Ovary (tissue), 10 donors: ENCODE measurements at regions of chr15 and their contacts with region 1.

Region 1: DNA sequence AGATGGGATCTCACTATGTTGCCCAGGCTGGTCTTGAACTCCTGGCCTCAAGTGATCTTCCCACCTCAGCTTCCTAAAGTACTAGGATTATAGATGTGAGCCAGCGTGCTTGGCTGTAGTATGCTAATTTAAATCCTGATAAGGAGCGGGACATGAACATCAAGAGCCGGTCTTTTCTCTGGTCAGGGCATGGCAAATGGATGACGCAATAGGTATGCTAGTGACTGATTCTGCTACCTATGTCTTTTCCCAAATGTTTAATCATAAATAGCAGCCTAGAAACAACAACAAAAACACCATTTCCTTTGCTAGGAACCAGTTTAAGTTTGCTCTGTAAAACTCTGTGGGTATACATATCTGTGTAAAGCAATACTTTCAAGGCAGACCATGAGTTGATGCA is 64.7 kb downstream of the STARD9 start:
- DNase-seq: no peak
- H3K4me3 ChIP-seq: no peak overlapping the region
- H3K27ac ChIP-seq: no peak overlapping the region
- H3K4me1 ChIP-seq: peaks cover 1% of the 10 kb centered on the region
- H3K27me3 ChIP-seq: no peaks in the 10 kb centered on the region
- CTCF ChIP-seq: no peak
- EP300 ChIP-seq: no peak
- POLR2A ChIP-seq: no peak

Region 2: GRCh38 chr15:41993447-41994167 is 646.5 kb before region 1 on chr15:
- intact Hi-C with region 1: no loop called
- DNase-seq: peak in 1 of 5 donors; percentile 17
- H3K4me3 ChIP-seq: no peak overlapping the region
- H3K27ac ChIP-seq: no peak overlapping the region
- H3K4me1 ChIP-seq: no peaks in the 10 kb centered on the region
- H3K27me3 ChIP-seq: no peaks in the 10 kb centered on the region
- CTCF ChIP-seq: no peak
- EP300 ChIP-seq: no peak
- POLR2A ChIP-seq: no peak

Region 3: GRCh38 chr15:42548253-42549031 is 91.7 kb before region 1 on chr15 and contains the starts of genes HAUS2 and LRRC57:
- intact Hi-C with region 1: loop called in 1 of 4 experiments (anchors 10 kb)
- DNase-seq: peak; percentile 86 to 93 (median 90)
- H3K4me3 ChIP-seq: peak within 1 kb of the TSS; percentile 61
- H3K27ac ChIP-seq: peak within 1 kb of the TSS; percentile 83 to 93
- H3K4me1 ChIP-seq: peaks cover 4% of the 10 kb centered on the region
- H3K27me3 ChIP-seq: no peaks in the 10 kb centered on the region
- CTCF ChIP-seq: peak in 1 of 3 donors; percentile 13
- EP300 ChIP-seq: no peak
- POLR2A ChIP-seq: peak; percentile 90
- total RNA-seq, gene HAUS2: 11.1 to 22.9 (median 17.8) TPM
- total RNA-seq, gene LRRC57: 13.2 to 28.7 (median 17.7) TPM

Region 4: GRCh38 chr15:42716626-42717025 is 76.5 kb after region 1 on chr15:
- intact Hi-C with region 1: no loop called
- DNase-seq: no peak
- H3K4me3 ChIP-seq: no peak overlapping the region
- H3K27ac ChIP-seq: no peak overlapping the region
- H3K4me1 ChIP-seq: no peaks in the 10 kb centered on the region
- H3K27me3 ChIP-seq: no peaks in the 10 kb centered on the region
- CTCF ChIP-seq: no peak
- EP300 ChIP-seq: no peak
- POLR2A ChIP-seq: no peak